ENCODE measurements at regions of chr20 and their contacts with region 1.

Region 1: DNA sequence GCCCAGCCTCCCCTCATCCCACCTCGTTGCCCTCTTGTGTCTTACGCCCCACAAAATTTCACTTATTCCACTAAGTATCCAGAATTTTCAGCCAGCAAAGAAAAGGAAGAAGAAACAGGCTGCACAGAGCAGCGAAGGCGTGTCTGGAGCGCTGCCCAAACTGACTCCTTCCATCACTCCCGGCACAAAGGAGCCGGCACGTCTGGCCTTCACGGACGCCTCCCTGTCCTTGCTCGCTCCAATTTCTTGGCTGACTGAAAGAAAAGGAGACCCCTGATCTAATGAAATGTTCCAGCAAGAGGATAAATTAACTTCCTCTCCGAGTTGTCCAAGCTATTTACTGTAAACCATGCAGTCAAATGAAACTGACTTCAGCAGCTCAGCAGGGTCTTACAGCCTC is 152.3 kb upstream of the CDH4 start:
- DNase-seq: no peak
- ATAC-seq: no peak
- H3K4me3 ChIP-seq: no peak overlapping the region
- H3K27ac ChIP-seq: no peak overlapping the region
- H3K4me1 ChIP-seq: no peaks in the 10 kb centered on the region
- H3K27me3 ChIP-seq: peaks cover 0 to 3% (median 1%) of the 10 kb centered on the region in 3 donors
- CTCF ChIP-seq: no peak

Region 2: DNA sequence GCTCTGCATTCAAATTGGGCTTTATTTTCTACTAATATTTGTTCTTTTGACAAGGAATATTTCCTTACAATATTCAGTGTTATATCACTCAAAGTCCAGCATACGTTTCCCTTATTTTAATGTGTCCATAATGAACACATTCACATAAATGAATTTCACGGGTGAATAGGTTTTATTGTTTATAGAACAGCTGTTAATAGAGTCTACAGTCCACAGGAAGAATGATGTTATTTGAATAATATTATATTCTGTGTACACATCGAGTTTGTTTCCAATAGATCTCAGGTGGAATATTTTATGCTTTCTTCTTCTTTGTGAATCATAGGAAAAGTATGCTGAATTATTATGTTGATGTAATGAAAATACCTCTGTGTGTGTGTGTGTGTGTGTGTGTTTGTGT is 559.2 kb before region 1 on chr20:
- intact Hi-C with region 1: loop called in 1 of 2 experiments (anchors 5 kb)
- DNase-seq: no peak
- ATAC-seq: no peak
- H3K4me3 ChIP-seq: no peak overlapping the region
- H3K27ac ChIP-seq: no peak overlapping the region
- H3K4me1 ChIP-seq: no peaks in the 10 kb centered on the region
- H3K27me3 ChIP-seq: peaks cover 0 to 3% (median 0%) of the 10 kb centered on the region in 3 donors
- CTCF ChIP-seq: no peak

Region 3: GRCh38 chr20:61048302-61048701 is 51.5 kb before region 1 on chr20:
- intact Hi-C with region 1: loop called in 1 of 2 experiments (anchors 1 kb)
- DNase-seq: no peak
- ATAC-seq: no peak
- H3K4me3 ChIP-seq: no peak overlapping the region
- H3K27ac ChIP-seq: no peak overlapping the region
- H3K4me1 ChIP-seq: no peaks in the 10 kb centered on the region
- H3K27me3 ChIP-seq: peaks cover 0 to 5% (median 0%) of the 10 kb centered on the region in 3 donors
- CTCF ChIP-seq: no peak